Caco-2 (cell line): ENCODE measurements at regions of chrX and their contacts with region 1.

Region 1: GRCh38 chrX:12825801-12826200 is 34.6 kb downstream of the PRPS2 start:
- DNase-seq: peak; percentile 42 to 54
- H3K4me3 ChIP-seq: no peak overlapping the region
- H3K4me3 Mint-ChIP-seq: no peak overlapping the region
- H3K27ac Mint-ChIP-seq: peak overlapping the region; percentile 12
- H3K4me1 ChIP-seq: peaks cover 31% of the 10 kb centered on the region
- H3K4me1 Mint-ChIP-seq: peaks cover 23% of the 10 kb centered on the region
- H3K27me3 ChIP-seq: no peaks in the 10 kb centered on the region
- H3K27me3 Mint-ChIP-seq: no peaks in the 10 kb centered on the region
- CTCF ChIP-seq: no peak

Region 2: GRCh38 chrX:11381464-11381863 is 1444.3 kb before region 1 on chrX:
- CTCF ChIA-PET with region 1: no interaction called
- POLR2A ChIA-PET with region 1: no interaction called
- intact Hi-C with region 1: no loop called
- DNase-seq: peak; percentile 33 to 54
- H3K4me3 ChIP-seq: no peak overlapping the region
- H3K4me3 Mint-ChIP-seq: no peak overlapping the region
- H3K27ac Mint-ChIP-seq: no peak overlapping the region
- H3K4me1 ChIP-seq: peaks cover 19% of the 10 kb centered on the region
- H3K4me1 Mint-ChIP-seq: peaks cover 3% of the 10 kb centered on the region
- H3K27me3 ChIP-seq: no peaks in the 10 kb centered on the region
- H3K27me3 Mint-ChIP-seq: no peaks in the 10 kb centered on the region
- CTCF ChIP-seq: peak; percentile 44 to 45

Region 3: GRCh38 chrX:12480956-12481355 is 344.8 kb before region 1 on chrX:
- CTCF ChIA-PET with region 1: no interaction called
- POLR2A ChIA-PET with region 1: no interaction called
- intact Hi-C with region 1: no loop called
- DNase-seq: no peak
- H3K4me3 ChIP-seq: no peak overlapping the region
- H3K4me3 Mint-ChIP-seq: no peak overlapping the region
- H3K27ac Mint-ChIP-seq: no peak overlapping the region
- H3K4me1 ChIP-seq: no peaks in the 10 kb centered on the region
- H3K4me1 Mint-ChIP-seq: no peaks in the 10 kb centered on the region
- H3K27me3 ChIP-seq: no peaks in the 10 kb centered on the region
- H3K27me3 Mint-ChIP-seq: peaks cover 4% of the 10 kb centered on the region
- CTCF ChIP-seq: no peak

Region 4: GRCh38 chrX:12814420-12814819 is 11.4 kb before region 1 on chrX:
- CTCF ChIA-PET with region 1: interaction called, 12 read pairs
- POLR2A ChIA-PET with region 1: no interaction called
- intact Hi-C with region 1: no loop called
- DNase-seq: peak; percentile 39 to 59
- H3K4me3 ChIP-seq: no peak overlapping the region
- H3K4me3 Mint-ChIP-seq: no peak overlapping the region
- H3K27ac Mint-ChIP-seq: no peak overlapping the region
- H3K4me1 ChIP-seq: no peaks in the 10 kb centered on the region
- H3K4me1 Mint-ChIP-seq: no peaks in the 10 kb centered on the region
- H3K27me3 ChIP-seq: no peaks in the 10 kb centered on the region
- H3K27me3 Mint-ChIP-seq: no peaks in the 10 kb centered on the region
- CTCF ChIP-seq: peak in 1 of 2 experiments; percentile 49

Region 5: GRCh38 chrX:12843668-12844279 is 18.0 kb after region 1 on chrX:
- CTCF ChIA-PET with region 1: interaction called, 3 read pairs
- POLR2A ChIA-PET with region 1: no interaction called
- intact Hi-C with region 1: loop called (anchors 2 kb)
- DNase-seq: peak; percentile 46 to 56
- H3K4me3 ChIP-seq: peak overlapping the region; percentile 12; the same call in 1 of the 2 replicates
- H3K4me3 Mint-ChIP-seq: peak overlapping the region; percentile 57
- H3K27ac Mint-ChIP-seq: peak overlapping the region; percentile 59
- H3K4me1 ChIP-seq: peaks cover 17% of the 10 kb centered on the region
- H3K4me1 Mint-ChIP-seq: no peaks in the 10 kb centered on the region
- H3K27me3 ChIP-seq: no peaks in the 10 kb centered on the region
- H3K27me3 Mint-ChIP-seq: no peaks in the 10 kb centered on the region
- CTCF ChIP-seq: no peak

Region 6: DNA sequence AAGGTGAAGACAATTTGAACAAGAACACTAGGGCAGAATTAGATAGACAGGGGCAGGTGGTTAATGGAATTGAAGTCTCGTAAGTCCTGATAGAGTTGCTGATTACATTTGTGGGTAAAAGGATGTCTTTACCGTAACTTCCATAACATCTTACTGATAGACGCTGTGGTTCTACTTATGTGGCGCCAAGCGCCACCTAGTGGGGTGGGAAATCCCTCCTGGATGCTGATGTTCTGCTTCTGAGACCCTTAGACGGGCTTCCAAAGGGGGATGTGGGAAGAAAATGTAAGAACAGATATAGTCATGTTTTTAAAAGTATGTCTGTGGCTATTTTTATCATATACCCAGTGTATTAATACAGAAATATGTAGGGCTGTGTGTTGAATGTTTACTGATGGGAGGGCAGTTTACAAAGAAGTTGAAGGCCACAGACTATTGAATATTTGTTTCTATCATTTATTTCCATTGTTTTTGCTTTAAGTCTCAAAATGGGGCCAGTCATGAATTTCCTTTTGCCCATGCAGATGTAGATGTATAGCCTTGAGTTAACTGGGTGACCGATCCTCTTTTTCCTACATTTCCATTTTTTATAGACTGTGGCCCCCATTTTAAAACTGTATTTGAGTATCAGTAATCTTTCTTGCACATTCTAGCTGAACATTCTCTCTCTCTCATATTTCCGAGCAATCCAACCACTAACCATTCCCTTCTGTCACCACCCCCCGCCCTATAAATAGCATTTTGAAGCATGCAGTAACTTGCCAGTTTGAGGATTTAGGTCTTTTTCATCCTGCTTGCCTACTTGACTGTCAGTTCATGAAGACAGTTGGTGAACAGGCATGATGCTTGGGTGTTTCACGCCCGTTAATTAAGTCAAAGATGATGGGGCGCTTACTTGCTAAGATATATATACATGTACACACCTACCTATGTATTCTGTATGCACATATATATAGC is 68.6 kb after region 1 on chrX:
- CTCF ChIA-PET with region 1: interaction called, 3 read pairs
- POLR2A ChIA-PET with region 1: no interaction called
- intact Hi-C with region 1: loop called (anchors 1 kb)
- DNase-seq: peak; percentile 32 to 44
- H3K4me3 ChIP-seq: no peak overlapping the region
- H3K4me3 Mint-ChIP-seq: no peak overlapping the region
- H3K27ac Mint-ChIP-seq: no peak overlapping the region
- H3K4me1 ChIP-seq: no peaks in the 10 kb centered on the region
- H3K4me1 Mint-ChIP-seq: no peaks in the 10 kb centered on the region
- H3K27me3 ChIP-seq: no peaks in the 10 kb centered on the region
- H3K27me3 Mint-ChIP-seq: no peaks in the 10 kb centered on the region
- CTCF ChIP-seq: peak; percentile 58 to 78